Mammary epithelial cell (primary cell): ENCODE measurements at regions of chr1 and their contacts with region 1.

Region 1: GRCh38 chr1:44594871-44595746 is 79.2 kb downstream of the TMEM53 start:
- DNase-seq: peak; percentile 33
- H3K4me3 ChIP-seq: no peak overlapping the region
- H3K27ac ChIP-seq: no peak overlapping the region
- H3K4me1 ChIP-seq: no peaks in the 10 kb centered on the region
- H3K27me3 ChIP-seq: peaks cover 8% of the 10 kb centered on the region
- CTCF ChIP-seq: peak; percentile 87 to 97

Region 2: GRCh38 chr1:44002606-44003157 is 592.4 kb before region 1 on chr1:
- CTCF ChIA-PET with region 1: no interaction called
- dilution Hi-C with region 1: no loop called
- in situ Hi-C with region 1: no loop called
- intact Hi-C with region 1: loop called (anchors 10 kb)
- DNase-seq: no peak
- H3K4me3 ChIP-seq: no peak overlapping the region
- H3K27ac ChIP-seq: no peak overlapping the region
- H3K4me1 ChIP-seq: no peaks in the 10 kb centered on the region
- H3K27me3 ChIP-seq: no peaks in the 10 kb centered on the region
- CTCF ChIP-seq: peak in 1 of 2 donors; percentile 9

Region 3: DNA sequence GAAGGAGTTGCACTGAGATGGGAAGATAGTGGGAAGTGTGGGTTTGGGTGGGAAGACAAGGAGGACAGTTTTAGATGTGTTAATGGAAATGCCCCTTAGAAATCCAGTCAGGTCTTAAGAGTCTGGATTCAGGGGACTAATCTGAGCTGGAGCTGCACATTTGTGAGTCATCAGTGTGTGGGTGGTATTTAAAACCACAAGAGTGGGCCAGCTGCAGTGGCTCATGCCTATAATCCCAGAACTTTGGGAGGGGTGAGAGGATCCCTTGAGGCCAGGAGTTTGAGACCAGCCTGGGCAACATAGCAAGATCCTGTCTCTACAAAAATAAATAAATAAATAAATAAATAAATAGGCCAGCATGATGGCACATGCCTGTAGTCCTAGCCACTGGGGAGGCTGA is 522.9 kb before region 1 on chr1:
- CTCF ChIA-PET with region 1: no interaction called
- dilution Hi-C with region 1: no loop called
- in situ Hi-C with region 1: loop called in 1 of 2 experiments (anchors 25 kb)
- intact Hi-C with region 1: no loop called
- DNase-seq: peak; percentile 82
- H3K4me3 ChIP-seq: no peak overlapping the region
- H3K27ac ChIP-seq: no peak overlapping the region
- H3K4me1 ChIP-seq: peaks cover 4% of the 10 kb centered on the region
- H3K27me3 ChIP-seq: peaks cover 4% of the 10 kb centered on the region
- CTCF ChIP-seq: no peak

Region 4: DNA sequence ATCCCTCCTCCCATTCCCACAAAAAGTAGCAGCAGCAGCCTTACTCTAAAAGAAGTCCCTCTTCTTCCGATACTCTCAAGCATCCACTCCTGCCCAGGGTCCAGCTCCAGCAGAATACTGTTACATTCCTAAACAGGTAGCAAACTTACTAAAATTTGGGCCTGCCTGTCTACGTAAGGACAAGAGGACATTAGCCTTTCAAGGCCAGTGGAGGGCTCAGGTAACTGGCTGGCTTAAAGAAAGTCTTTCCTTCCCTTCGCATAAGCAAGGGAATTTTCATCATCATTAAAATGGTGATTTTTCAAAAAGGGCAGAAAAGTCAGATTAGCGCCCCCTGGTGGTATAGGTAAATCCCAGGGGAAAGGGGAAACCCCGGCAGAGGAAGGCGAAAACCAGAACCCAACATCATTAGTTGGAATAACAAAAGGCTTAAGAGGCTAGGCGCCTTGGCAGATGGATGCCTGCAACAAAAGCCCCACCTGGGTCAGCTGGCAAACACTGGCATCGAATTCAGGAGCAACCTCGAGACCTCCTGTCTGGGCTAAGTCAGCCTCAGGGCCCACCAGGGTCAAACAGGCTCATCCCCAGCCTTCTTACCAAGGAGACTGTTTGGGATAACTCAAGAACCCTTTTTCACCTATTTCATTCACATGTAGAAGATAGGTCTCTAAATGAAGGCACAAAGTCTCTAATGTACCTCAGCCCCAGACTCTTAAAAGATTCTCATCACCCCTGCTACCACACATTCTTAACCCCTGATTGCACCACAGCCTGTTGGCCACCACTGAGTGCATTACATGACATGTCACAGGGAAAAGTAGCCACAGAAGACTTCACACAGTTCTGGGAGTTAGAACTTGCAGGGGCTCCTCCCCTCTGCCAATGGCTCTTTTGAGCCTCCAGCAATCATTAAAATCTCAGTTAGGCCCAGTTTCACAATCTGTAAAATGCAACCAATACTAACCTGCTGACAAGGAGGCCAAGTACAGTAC is 276.7 kb before region 1 on chr1:
- CTCF ChIA-PET with region 1: no interaction called
- dilution Hi-C with region 1: no loop called
- in situ Hi-C with region 1: no loop called
- intact Hi-C with region 1: loop called (anchors 5 kb)
- DNase-seq: peak; percentile 24
- H3K4me3 ChIP-seq: no peak overlapping the region
- H3K27ac ChIP-seq: no peak overlapping the region
- H3K4me1 ChIP-seq: no peaks in the 10 kb centered on the region
- H3K27me3 ChIP-seq: no peaks in the 10 kb centered on the region
- CTCF ChIP-seq: peak; percentile 76 to 81

Region 5: DNA sequence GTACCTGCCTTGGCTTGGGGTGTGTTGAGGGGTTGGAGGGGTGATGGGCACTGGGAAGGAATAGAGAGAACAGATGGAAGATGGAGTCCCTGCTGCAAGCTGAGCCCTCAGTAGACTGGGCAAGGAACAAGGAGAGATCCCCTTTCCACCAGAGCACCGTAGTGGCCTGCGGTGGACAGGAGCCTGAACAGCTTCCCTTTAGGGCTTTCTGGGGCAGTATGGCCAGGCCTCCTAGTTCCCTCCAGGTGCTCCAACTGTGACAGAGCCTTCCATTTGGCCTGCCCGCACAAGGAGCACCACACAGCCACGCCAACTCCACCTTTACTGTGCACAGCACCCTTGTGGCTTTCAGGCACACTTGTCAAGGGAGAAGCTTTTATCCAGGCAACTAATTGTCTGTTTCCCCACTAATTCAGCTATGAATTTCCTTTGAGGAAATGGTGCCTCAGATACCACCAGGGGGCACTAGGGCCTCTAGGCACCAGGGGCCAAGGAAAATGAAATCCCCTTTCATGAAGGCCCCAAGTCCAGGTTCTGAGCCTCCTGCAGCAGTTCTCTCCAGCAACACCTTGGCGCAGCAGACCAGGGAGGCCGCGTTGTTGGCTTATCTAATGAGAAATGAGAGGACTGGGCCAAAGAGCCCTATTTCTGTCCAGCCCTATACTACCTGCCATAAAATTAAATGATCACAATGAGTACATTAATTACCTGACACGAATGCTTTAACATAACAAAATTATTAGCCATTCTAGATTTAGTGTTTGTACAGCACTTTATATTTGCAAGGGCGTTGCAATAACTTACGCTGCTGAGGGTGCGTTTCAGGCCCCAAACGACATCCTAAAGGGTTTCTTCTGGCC is 217.0 kb before region 1 on chr1:
- CTCF ChIA-PET with region 1: interaction called, 5 read pairs
- dilution Hi-C with region 1: no loop called
- in situ Hi-C with region 1: loop called (anchors 5 to 10 kb)
- intact Hi-C with region 1: loop called (anchors 1 kb)
- DNase-seq: peak; percentile 15
- H3K4me3 ChIP-seq: no peak overlapping the region
- H3K27ac ChIP-seq: no peak overlapping the region
- H3K4me1 ChIP-seq: no peaks in the 10 kb centered on the region
- H3K27me3 ChIP-seq: peaks cover 4% of the 10 kb centered on the region
- CTCF ChIP-seq: peak; percentile 75 to 81

Region 6: GRCh38 chr1:44417351-44418021 is 177.6 kb before region 1 on chr1:
- CTCF ChIA-PET with region 1: no interaction called
- dilution Hi-C with region 1: no loop called
- in situ Hi-C with region 1: no loop called
- intact Hi-C with region 1: no loop called
- DNase-seq: no peak
- H3K4me3 ChIP-seq: peak overlapping the region in 1 of 3 experiments; percentile 15
- H3K27ac ChIP-seq: no peak overlapping the region
- H3K4me1 ChIP-seq: peaks cover 11% of the 10 kb centered on the region
- H3K27me3 ChIP-seq: peaks cover 42% of the 10 kb centered on the region
- CTCF ChIP-seq: no peak